Ascending aorta (tissue), 2 donors: ENCODE measurements at regions of chr9 and their contacts with region 1.

Region 1: GRCh38 chr9:85741875-85742629 is at the start of gene AGTPBP1:
- DNase-seq: peak; percentile 76 to 96
- H3K4me3 ChIP-seq: peak within 1 kb of the TSS; percentile 88 to 98
- H3K27ac ChIP-seq: peak within 1 kb of the TSS; percentile 83 to 86
- H3K4me1 ChIP-seq: peaks cover 0 to 8% of the 10 kb centered on the region in 2 donors
- H3K27me3 ChIP-seq: no peaks in the 10 kb centered on the region
- CTCF ChIP-seq: no peak
- total RNA-seq, gene AGTPBP1: 28.3 TPM

Region 2: DNA sequence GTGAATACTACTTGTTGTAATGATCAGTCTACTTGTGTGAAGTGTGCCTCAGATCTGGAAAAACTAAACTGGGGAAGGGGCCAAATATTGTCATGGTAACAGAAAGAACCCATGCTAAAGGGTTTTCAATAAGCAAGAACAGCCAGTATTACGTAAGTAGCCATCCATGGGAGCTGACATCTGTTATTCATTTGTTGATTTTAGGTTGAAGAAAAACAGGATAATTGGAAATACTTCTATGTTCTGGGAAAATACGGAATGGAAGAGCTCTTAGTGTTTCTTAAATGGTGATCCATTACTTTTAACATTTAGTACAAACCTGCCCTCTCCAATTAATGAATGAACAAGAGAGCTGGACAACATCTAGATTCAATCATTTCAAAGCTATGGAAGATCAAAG is 586.7 kb before region 1 on chr9:
- intact Hi-C with region 1: no loop called
- DNase-seq: no peak
- H3K4me3 ChIP-seq: no peak overlapping the region
- H3K27ac ChIP-seq: no peak overlapping the region
- H3K4me1 ChIP-seq: no peaks in the 10 kb centered on the region
- H3K27me3 ChIP-seq: no peaks in the 10 kb centered on the region
- CTCF ChIP-seq: no peak

Region 3: GRCh38 chr9:85536076-85536475 is 206.0 kb before region 1 on chr9:
- intact Hi-C with region 1: loop called (anchors 10 kb)
- DNase-seq: peak in 1 of 2 donors; percentile 81
- H3K4me3 ChIP-seq: no peak overlapping the region
- H3K27ac ChIP-seq: no peak overlapping the region
- H3K4me1 ChIP-seq: peaks cover 0 to 2% of the 10 kb centered on the region in 2 donors
- H3K27me3 ChIP-seq: no peaks in the 10 kb centered on the region
- CTCF ChIP-seq: no peak

Region 4: GRCh38 chr9:85594316-85594715 is 147.7 kb before region 1 on chr9:
- intact Hi-C with region 1: no loop called
- DNase-seq: no peak
- H3K4me3 ChIP-seq: no peak overlapping the region
- H3K27ac ChIP-seq: no peak overlapping the region
- H3K4me1 ChIP-seq: no peaks in the 10 kb centered on the region
- H3K27me3 ChIP-seq: no peaks in the 10 kb centered on the region
- CTCF ChIP-seq: no peak

Region 5: GRCh38 chr9:85702726-85703289 is 39.2 kb before region 1 on chr9:
- intact Hi-C with region 1: loop called (anchors 10 kb)
- DNase-seq: no peak
- H3K4me3 ChIP-seq: no peak overlapping the region
- H3K27ac ChIP-seq: no peak overlapping the region
- H3K4me1 ChIP-seq: peaks cover 0 to 3% of the 10 kb centered on the region in 2 donors
- H3K27me3 ChIP-seq: no peaks in the 10 kb centered on the region
- CTCF ChIP-seq: no peak

Region 6: GRCh38 chr9:85940832-85941621 is 199.0 kb after region 1 on chr9 and contains the start of gene NAA35:
- intact Hi-C with region 1: loop called (anchors 2 kb)
- DNase-seq: peak; percentile 91 to 99
- H3K4me3 ChIP-seq: peak within 1 kb of the TSS; percentile 74 to 84
- H3K27ac ChIP-seq: peak within 1 kb of the TSS; percentile 89 to 96
- H3K4me1 ChIP-seq: peaks cover 0 to 18% of the 10 kb centered on the region in 2 donors
- H3K27me3 ChIP-seq: no peaks in the 10 kb centered on the region
- CTCF ChIP-seq: no peak
- total RNA-seq, gene NAA35: 3.3 TPM

Region 7: GRCh38 chr9:86044001-86044400 is 301.9 kb after region 1 on chr9:
- intact Hi-C with region 1: no loop called
- DNase-seq: no peak
- H3K4me3 ChIP-seq: no peak overlapping the region
- H3K27ac ChIP-seq: no peak overlapping the region
- H3K4me1 ChIP-seq: no peaks in the 10 kb centered on the region
- H3K27me3 ChIP-seq: no peaks in the 10 kb centered on the region
- CTCF ChIP-seq: no peak

Region 8: DNA sequence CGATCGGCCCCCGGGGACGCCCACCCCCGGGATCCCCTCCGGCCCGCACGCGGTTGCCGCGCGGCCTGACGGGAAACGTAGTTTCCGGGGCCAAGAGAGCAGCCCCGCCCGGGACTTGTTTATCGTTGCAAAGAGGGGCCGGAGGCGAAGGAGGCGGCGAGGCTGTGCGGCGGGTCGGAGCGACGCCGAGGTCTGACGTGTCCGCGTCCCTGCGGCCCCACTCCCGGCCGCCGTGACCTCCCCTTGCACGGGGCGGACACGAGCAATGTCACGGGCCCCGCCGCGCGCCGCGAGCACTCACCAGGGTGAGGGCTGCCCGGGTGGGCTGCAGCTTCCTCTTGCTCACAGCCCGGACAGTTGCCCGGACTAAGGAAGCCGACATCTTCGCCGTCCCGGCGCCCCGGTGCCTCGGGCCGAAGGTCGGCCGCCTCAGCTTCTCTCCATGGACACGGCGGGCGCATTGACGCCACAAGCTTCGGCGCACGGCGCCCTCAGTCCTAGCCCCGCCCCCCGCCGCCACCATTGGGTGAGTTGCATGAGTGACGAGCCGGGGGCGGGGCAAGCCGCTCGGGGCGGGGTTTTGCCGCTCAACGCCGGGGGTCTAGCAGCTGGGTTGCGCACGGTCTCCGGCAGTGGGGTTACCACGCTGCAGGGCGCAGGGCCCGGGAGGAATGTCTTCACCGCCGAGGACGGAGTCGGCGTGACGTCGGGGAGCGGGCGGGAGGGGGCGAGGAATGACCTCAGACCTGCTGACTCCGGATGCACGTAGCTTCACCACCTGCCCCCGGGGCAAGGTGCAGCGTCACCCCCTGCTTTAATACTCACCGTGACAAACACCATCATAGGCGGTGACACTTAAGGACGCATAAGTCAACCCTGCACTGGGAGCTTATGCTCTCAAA is 540.3 kb after region 1 on chr9 and contains the start of gene ISCA1:
- intact Hi-C with region 1: loop called (anchors 5 kb)
- DNase-seq: peak; percentile 94 to 98
- H3K4me3 ChIP-seq: peak within 1 kb of the TSS; percentile 68 to 81
- H3K27ac ChIP-seq: peak within 1 kb of the TSS; percentile 91 to 98
- H3K4me1 ChIP-seq: peaks cover 0 to 15% of the 10 kb centered on the region in 2 donors
- H3K27me3 ChIP-seq: no peaks in the 10 kb centered on the region
- CTCF ChIP-seq: no peak
- total RNA-seq, gene ISCA1: 20.6 TPM

Region 9: GRCh38 chr9:86354011-86354817 is 612.2 kb after region 1 on chr9 and contains the start of gene TUT7:
- intact Hi-C with region 1: loop called (anchors 5 kb)
- DNase-seq: peak; percentile 81 to 97
- H3K4me3 ChIP-seq: peak within 1 kb of the TSS; percentile 93 to 99
- H3K27ac ChIP-seq: peak within 1 kb of the TSS; percentile 97 to 100
- H3K4me1 ChIP-seq: peaks cover 3 to 16% of the 10 kb centered on the region in 2 donors
- H3K27me3 ChIP-seq: no peaks in the 10 kb centered on the region
- CTCF ChIP-seq: no peak
- total RNA-seq, gene TUT7: 12.9 TPM

Region 10: GRCh38 chr9:87713278-87713987 is 1971.4 kb after region 1 on chr9:
- intact Hi-C with region 1: loop called (anchors 10 kb)
- DNase-seq: peak; percentile 82 to 95
- H3K4me3 ChIP-seq: peak overlapping the region in 1 of 2 donors; percentile 33
- H3K27ac ChIP-seq: peak overlapping the region; percentile 64 to 78
- H3K4me1 ChIP-seq: peaks cover 0 to 14% of the 10 kb centered on the region in 2 donors
- H3K27me3 ChIP-seq: no peaks in the 10 kb centered on the region
- CTCF ChIP-seq: peak in 1 of 3 experiments; percentile 15